Tibial artery (tissue), 4 donors: ENCODE measurements at regions of chr9 and their contacts with region 1.

Region 1: GRCh38 chr9:30900706-30901105 is 1483.7 kb upstream of the ACO1 start:
- DNase-seq: no peak
- H3K4me3 ChIP-seq: no peak overlapping the region
- H3K27ac ChIP-seq: no peak overlapping the region
- H3K4me1 ChIP-seq: peaks cover 0 to 6% (median 0%) of the 10 kb centered on the region in 4 donors
- H3K27me3 ChIP-seq: no peaks in the 10 kb centered on the region
- CTCF ChIP-seq: no peak

Region 2: DNA sequence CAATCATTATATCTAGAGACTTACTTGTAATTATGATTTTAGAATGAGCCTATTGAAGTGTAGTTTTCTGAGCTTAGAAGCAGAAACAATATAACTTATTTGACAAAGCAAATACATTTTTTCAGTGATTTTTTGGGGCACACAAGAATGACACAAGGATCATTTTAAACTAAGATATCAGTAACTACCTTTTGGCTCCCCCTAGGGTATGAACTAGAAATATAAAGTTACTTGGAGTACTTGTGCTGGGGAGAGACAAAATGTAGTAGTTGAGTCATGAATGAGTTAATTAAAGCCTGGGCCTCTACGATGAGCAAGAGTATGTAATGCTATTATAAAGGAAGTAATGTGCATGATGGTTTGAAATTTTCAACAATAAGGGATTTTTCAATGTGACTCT is 239.6 kb after region 1 on chr9:
- intact Hi-C with region 1: no loop called
- DNase-seq: no peak
- H3K4me3 ChIP-seq: no peak overlapping the region
- H3K27ac ChIP-seq: no peak overlapping the region
- H3K4me1 ChIP-seq: no peaks in the 10 kb centered on the region
- H3K27me3 ChIP-seq: no peaks in the 10 kb centered on the region
- CTCF ChIP-seq: no peak

Region 3: DNA sequence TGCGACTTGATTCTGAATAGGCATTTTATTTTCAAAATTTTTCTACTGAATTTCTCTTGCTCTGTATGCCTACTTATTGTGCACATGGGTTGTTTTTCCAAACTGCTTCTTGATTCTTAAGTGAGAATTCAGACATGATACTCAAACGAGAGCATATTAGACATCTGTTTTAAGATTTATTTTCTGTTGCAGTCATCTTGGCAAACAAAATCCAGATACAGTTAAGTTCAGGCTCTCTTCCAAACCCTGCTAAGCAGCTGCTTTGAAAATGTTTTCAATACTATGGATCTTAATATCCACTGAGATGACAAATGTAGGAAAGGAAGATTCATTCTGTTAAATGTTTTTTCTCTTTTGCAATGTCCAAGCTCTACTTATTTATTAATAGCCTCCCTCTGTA is 1887.1 kb after region 1 on chr9:
- intact Hi-C with region 1: loop called (anchors 5 kb)
- DNase-seq: no peak
- H3K4me3 ChIP-seq: no peak overlapping the region
- H3K27ac ChIP-seq: no peak overlapping the region
- H3K4me1 ChIP-seq: peaks cover 0 to 8% (median 0%) of the 10 kb centered on the region in 4 donors
- H3K27me3 ChIP-seq: peaks cover 0 to 18% of the 10 kb centered on the region in 2 donors
- CTCF ChIP-seq: no peak